ENCODE measurements at regions of chr5 and their contacts with region 1.

Region 1: GRCh38 chr5:37248970-37249686 is at the start of gene CPLANE1:
- DNase-seq: peak; percentile 47 to 96
- H3K4me3 ChIP-seq: peak within 1 kb of the TSS; percentile 95
- H3K27ac ChIP-seq: no peak within 1 kb of the TSS
- H3K4me1 ChIP-seq: peaks cover 12% of the 10 kb centered on the region
- H3K27me3 ChIP-seq: no peaks in the 10 kb centered on the region
- CTCF ChIP-seq: no peak; the same call in 1 of the 2 replicates
- total RNA-seq, gene CPLANE1: 32.5 and 45.5 TPM in 2 replicates

Region 2: DNA sequence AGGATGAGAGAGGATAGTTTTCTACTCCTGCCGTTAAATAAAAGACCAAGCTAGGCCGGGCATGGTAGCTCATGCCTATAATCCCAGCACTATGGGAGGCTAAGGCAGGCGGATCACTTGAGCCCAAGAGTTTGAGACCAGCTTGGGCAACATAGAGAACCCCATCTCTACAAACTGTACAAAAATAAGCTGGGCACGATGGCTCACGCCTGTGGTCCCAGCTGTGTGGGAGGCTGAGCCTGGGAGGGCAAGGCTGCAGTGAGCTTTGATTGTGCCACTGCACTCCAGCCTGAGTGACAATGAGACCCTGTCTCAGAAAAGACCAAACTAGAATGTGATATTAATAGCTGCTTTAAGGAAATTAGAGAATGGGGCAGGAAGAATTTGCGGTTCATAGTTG is 214.2 kb before region 1 on chr5:
- CTCF ChIA-PET with region 1: no interaction called
- POLR2A ChIA-PET with region 1: interaction called, 16 read pairs
- intact Hi-C with region 1: no loop called
- DNase-seq: no peak
- H3K4me3 ChIP-seq: no peak overlapping the region
- H3K27ac ChIP-seq: no peak overlapping the region
- H3K4me1 ChIP-seq: no peaks in the 10 kb centered on the region
- H3K27me3 ChIP-seq: no peaks in the 10 kb centered on the region
- CTCF ChIP-seq: no peak

Region 3: DNA sequence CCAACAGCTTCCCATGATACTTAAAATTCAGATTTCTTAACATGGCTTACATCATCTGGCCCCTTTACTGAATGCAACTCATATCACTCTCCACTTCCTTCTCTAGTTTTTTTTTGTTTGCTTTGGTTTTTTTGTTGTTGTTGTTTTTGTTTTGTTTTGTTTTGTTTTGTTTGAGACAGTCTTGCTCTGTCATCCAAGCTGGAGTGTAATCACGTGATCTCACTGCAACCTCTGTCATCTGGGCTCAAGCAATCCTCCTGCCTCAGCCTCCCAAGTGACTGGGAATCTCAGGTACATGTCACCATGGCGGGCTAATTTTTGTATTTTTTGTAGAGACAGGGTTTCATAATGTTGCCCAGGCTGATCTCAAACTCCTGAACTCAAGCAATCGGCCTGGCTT is 41.3 kb before region 1 on chr5:
- CTCF ChIA-PET with region 1: no interaction called
- POLR2A ChIA-PET with region 1: interaction called, 12 read pairs
- intact Hi-C with region 1: no loop called
- DNase-seq: no peak
- H3K4me3 ChIP-seq: no peak overlapping the region
- H3K27ac ChIP-seq: no peak overlapping the region
- H3K4me1 ChIP-seq: no peaks in the 10 kb centered on the region
- H3K27me3 ChIP-seq: no peaks in the 10 kb centered on the region
- CTCF ChIP-seq: no peak

Region 4: DNA sequence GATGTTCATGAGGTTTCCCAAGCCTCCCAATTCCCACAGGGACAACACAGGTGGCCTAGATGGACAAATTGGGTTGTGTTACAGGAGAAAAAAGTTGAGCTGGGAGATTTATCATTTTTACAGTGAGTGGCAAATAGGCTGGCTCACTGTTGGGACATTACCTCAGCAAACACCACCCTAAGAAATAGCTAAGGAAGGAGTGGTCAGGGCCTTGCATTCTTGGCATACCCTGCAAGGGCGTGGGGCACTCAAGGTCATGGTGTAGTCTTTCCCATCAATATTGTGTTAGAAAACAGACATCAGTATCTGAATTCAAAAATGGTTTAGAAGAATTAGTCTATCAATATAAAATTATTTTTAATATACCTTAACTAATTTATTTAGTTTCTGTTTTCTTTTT is 23.4 kb after region 1 on chr5:
- CTCF ChIA-PET with region 1: interaction called, 7 read pairs
- POLR2A ChIA-PET with region 1: interaction called, 21 read pairs
- intact Hi-C with region 1: loop called (anchors 1 kb)
- DNase-seq: peak; percentile 89 to 94
- H3K4me3 ChIP-seq: no peak overlapping the region
- H3K27ac ChIP-seq: peak overlapping the region; percentile 83
- H3K4me1 ChIP-seq: peaks cover 29% of the 10 kb centered on the region
- H3K27me3 ChIP-seq: no peaks in the 10 kb centered on the region
- CTCF ChIP-seq: no peak

Measured in PC-9 (cell line).